ENCODE measurements at regions of chr9 and their contacts with region 1.

Region 1: GRCh38 chr9:87678650-87679515 is 47.0 kb upstream of the CTSL start:
- DNase-seq: peak; percentile 47 to 69 (median 57)
- ATAC-seq: peak; percentile 63
- H3K4me3 ChIP-seq: no peak overlapping the region
- H3K27ac ChIP-seq: no peak overlapping the region
- H3K4me1 ChIP-seq: peaks cover 9 to 10% of the 10 kb centered on the region in 2 experiments; a peak in 4 of 5 replicates
- H3K27me3 ChIP-seq: no peaks in the 10 kb centered on the region
- CTCF ChIP-seq: peak; percentile 70 to 77 (median 73)
- EP300 ChIP-seq: no peak
- POLR2A ChIP-seq: no peak
- RAD21 ChIP-seq: peak; percentile 54 to 79

Region 2: GRCh38 chr9:87693986-87694755 is 15.3 kb after region 1 on chr9:
- CTCF ChIA-PET with region 1: no interaction called
- POLR2A ChIA-PET with region 1: no interaction called
- in situ Hi-C with region 1: no loop called
- intact Hi-C with region 1: no loop called
- DNase-seq: no peak
- ATAC-seq: no peak
- H3K4me3 ChIP-seq: no peak overlapping the region
- H3K27ac ChIP-seq: no peak overlapping the region
- H3K4me1 ChIP-seq: no peaks in the 10 kb centered on the region
- H3K27me3 ChIP-seq: no peaks in the 10 kb centered on the region
- CTCF ChIP-seq: no peak
- EP300 ChIP-seq: no peak
- POLR2A ChIP-seq: no peak
- RAD21 ChIP-seq: no peak

Region 3: DNA sequence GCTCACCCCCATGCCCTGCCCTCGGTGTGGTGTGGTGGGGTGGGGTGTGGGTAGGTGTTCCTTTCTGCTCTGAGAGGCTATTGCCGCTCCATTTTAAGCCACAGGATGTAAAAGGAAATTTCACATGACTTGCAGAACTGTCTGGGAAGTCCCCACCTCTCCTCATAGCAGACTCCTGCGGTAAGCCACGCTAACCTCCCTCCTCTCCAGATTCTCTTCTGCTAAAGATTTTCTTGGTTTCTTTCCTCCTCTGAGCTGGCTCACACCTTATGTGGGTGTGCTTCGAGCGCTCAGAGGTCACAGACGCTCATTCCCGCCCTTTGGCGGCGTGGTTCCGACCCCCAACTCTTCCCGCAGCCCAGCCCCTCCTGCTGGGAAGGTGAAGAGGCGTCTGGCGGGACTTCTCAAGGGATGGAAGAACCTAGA is 328.3 kb after region 1 on chr9:
- CTCF ChIA-PET with region 1: no interaction called
- POLR2A ChIA-PET with region 1: no interaction called
- in situ Hi-C with region 1: no loop called
- intact Hi-C with region 1: no loop called
- DNase-seq: no peak
- ATAC-seq: no peak
- H3K4me3 ChIP-seq: no peak overlapping the region
- H3K27ac ChIP-seq: no peak overlapping the region
- H3K4me1 ChIP-seq: no peaks in the 10 kb centered on the region
- H3K27me3 ChIP-seq: peaks cover 0 to 21% of the 10 kb centered on the region in 2 experiments; a peak in 2 of 5 replicates
- CTCF ChIP-seq: no peak
- EP300 ChIP-seq: no peak
- POLR2A ChIP-seq: no peak
- RAD21 ChIP-seq: no peak

Region 4: GRCh38 chr9:88056876-88057275 is 378.0 kb after region 1 on chr9:
- CTCF ChIA-PET with region 1: no interaction called
- POLR2A ChIA-PET with region 1: no interaction called
- in situ Hi-C with region 1: loop called (anchors 10 kb)
- intact Hi-C with region 1: no loop called
- DNase-seq: no peak
- ATAC-seq: no peak
- H3K4me3 ChIP-seq: no peak overlapping the region
- H3K27ac ChIP-seq: no peak overlapping the region
- H3K4me1 ChIP-seq: no peaks in the 10 kb centered on the region
- H3K27me3 ChIP-seq: peaks cover 0 to 6% of the 10 kb centered on the region in 2 experiments; a peak in 1 of 5 replicates
- CTCF ChIP-seq: no peak
- EP300 ChIP-seq: no peak
- POLR2A ChIP-seq: no peak
- RAD21 ChIP-seq: no peak

Region 5: DNA sequence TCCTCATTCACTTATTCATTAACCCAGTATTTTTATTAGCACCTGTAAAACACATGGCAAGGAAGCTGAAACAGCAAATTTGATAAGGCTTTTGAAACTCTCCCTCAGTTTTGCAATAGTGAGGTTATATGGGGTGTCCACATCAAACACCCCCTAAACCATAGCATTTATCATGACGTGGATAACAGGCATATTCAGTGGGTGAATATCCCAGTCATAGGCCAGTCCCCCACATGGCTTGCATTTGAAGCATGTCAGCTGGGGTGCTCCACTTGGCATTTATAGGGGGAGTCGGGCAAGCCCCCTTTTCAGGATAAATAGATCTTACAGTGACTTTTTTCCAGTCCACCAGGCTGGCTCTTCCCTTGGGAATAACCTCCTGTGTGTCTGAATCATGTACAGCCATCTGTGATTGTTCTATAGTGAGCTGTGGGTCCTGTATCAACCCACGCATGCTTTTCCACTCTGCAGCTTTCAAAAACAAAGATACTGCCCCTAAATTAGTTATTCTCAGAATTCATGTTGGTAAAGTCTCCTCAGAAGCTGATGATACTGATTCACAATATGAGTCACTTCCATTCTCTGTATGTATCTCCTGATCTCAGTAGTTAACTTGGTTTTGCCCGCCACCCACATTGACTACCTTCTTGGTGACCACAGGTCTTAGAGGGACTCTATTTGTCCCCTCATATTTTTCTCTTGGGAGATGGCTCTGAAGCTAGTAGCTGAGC is 625.0 kb after region 1 on chr9:
- CTCF ChIA-PET with region 1: no interaction called
- POLR2A ChIA-PET with region 1: no interaction called
- in situ Hi-C with region 1: loop called (anchors 25 kb)
- intact Hi-C with region 1: no loop called
- DNase-seq: peak in 2 of 4 experiments; percentile 8 to 12
- ATAC-seq: no peak
- H3K4me3 ChIP-seq: no peak overlapping the region
- H3K27ac ChIP-seq: no peak overlapping the region
- H3K4me1 ChIP-seq: no peaks in the 10 kb centered on the region
- H3K27me3 ChIP-seq: peaks cover 0 to 40% of the 10 kb centered on the region in 2 experiments; a peak in 3 of 5 replicates
- CTCF ChIP-seq: no peak
- EP300 ChIP-seq: no peak
- POLR2A ChIP-seq: no peak
- RAD21 ChIP-seq: no peak

Region 6: GRCh38 chr9:88533929-88534455 is 855.1 kb after region 1 on chr9:
- CTCF ChIA-PET with region 1: no interaction called
- POLR2A ChIA-PET with region 1: no interaction called
- in situ Hi-C with region 1: no loop called
- intact Hi-C with region 1: no loop called
- DNase-seq: peak; percentile 30 to 62 (median 46)
- ATAC-seq: peak; percentile 44
- H3K4me3 ChIP-seq: peak overlapping the region; percentile 28
- H3K27ac ChIP-seq: no peak overlapping the region
- H3K4me1 ChIP-seq: peaks cover 0 to 16% of the 10 kb centered on the region in 2 experiments; a peak in 2 of 5 replicates
- H3K27me3 ChIP-seq: peaks cover 0 to 9% of the 10 kb centered on the region in 2 experiments; a peak in 2 of 5 replicates
- CTCF ChIP-seq: no peak
- EP300 ChIP-seq: no peak
- POLR2A ChIP-seq: no peak
- RAD21 ChIP-seq: no peak